ENCODE measurements at regions of chr19 and their contacts with region 1.

Region 1: DNA sequence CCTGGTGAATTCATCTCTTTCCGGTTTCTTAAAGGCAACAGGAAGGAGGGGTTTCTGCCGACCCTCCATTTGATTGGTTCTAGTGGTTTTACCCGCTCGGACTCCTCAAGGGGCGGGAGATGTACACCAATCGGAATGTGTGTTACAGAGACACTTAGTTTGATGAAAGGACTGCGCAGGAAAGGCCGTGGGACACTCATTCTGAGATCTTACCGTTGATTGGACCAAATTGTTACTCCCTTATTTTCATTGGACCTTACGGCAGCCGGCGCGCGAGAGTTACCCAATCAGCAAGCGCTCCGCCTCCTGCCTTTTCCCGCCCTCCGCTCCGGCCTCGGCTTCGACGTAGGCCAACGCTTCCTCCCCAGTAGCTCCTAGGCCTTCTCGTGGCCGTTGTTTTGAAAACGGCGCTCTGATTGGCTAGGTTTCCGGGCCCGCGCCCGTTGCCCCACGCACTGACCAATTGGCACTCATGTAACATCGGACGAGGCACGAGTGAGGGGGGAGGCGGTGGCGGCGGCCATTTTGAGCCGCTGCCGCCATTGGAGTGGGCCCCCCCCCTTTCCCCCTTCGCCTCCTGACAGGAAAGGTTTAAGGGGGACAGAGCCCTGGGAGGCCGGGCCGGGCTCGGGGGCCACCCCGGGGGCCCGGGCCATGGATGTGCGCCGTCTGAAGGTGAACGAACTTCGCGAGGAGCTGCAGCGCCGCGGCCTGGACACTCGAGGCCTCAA is at the start of gene HNRNPUL1:
- DNase-seq: peak; percentile 99
- H3K4me3 Mint-ChIP-seq: peak within 1 kb of the TSS; percentile 94
- H3K27ac Mint-ChIP-seq: peak within 1 kb of the TSS; percentile 99
- H3K4me1 Mint-ChIP-seq: peaks cover 52% of the 10 kb centered on the region
- H3K27me3 Mint-ChIP-seq: no peaks in the 10 kb centered on the region
- total RNA-seq, gene HNRNPUL1: 254 and 264 TPM in 2 replicates

Region 2: DNA sequence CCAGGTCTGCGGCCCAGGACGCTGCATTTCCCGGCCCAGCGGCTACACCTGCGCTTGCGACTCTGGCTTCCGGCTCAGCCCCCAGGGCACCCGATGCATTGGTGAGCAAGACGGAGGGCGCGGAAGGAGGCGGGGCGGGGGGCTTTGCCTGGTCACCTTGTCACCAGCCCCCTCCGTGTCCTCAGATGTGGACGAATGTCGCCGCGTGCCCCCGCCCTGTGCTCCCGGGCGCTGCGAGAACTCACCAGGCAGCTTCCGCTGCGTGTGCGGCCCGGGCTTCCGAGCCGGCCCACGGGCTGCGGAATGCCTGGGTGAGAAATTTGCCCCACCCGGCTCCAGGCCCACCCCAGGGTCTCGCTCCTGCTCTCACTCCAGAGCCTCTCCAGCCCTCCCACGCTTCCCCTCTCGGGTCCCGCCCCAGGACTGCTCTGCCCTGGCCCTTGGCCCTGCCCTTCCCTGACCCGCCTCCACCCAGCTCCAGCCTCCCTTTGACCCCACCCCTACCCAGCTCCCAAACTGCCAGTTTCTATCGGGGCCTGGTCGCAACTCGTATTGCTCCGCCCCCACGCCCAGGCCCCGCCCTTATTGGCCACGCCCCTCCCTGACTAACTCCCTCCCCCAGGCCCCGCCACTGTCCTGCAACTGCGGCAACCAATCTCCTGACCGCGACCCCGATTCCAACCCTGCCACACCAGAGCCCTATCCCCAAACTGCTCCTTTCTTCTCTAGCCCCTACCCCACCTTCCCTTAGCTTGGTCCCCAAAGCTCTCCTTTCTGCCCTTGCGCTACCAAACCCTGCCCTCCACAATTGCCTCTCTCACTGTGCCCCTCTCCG is 654.2 kb before region 1 on chr19:
- intact Hi-C with region 1: loop called (anchors 10 kb)
- DNase-seq: peak; percentile 86
- H3K4me3 Mint-ChIP-seq: peak overlapping the region; percentile 81
- H3K27ac Mint-ChIP-seq: peak overlapping the region; percentile 86
- H3K4me1 Mint-ChIP-seq: peaks cover 44% of the 10 kb centered on the region
- H3K27me3 Mint-ChIP-seq: no peaks in the 10 kb centered on the region

Region 3: DNA sequence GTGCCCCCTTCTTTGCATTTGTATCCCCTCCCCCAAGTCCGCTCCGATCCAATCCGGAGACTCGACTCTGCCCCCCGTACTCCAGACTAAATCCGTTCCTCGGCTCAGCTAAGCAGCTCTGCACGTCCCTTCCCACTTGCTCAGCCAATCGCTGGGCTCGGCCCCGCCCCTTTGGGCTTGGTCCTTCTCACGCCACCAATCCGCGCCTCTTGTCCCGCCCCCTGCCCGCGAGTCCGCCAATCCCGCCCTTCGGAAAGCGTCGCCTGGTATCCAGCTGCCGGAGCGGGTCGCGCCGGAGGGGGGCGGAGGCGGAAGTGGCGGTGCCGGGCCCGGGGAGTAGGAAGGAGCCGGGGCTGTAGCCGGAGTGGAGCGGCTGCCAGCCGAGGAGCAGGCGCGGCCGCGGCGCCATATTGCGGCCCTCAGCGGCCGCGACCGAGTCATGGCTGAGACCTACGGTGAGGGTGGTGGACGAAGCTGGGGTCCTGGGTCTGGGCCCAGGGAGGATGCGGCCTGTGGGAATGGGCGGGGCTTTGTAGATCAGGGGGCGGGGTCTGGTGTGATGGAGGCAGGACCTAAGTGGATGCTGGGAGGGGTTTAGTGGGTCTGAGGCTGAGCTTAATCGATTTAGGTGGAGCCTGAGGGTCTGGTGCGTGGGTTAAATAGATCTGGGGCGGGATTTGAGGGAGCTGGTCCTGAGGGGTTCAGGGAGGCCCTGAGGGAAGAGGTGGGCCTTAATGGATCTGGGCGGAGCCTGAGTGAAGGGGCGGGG is 485.9 kb before region 1 on chr19 and contains the start of gene RAB4B:
- intact Hi-C with region 1: loop called (anchors 2 kb)
- DNase-seq: peak; percentile 100
- H3K4me3 Mint-ChIP-seq: peak within 1 kb of the TSS; percentile 91
- H3K27ac Mint-ChIP-seq: peak within 1 kb of the TSS; percentile 89
- H3K4me1 Mint-ChIP-seq: peaks cover 51% of the 10 kb centered on the region
- H3K27me3 Mint-ChIP-seq: peaks cover 2% of the 10 kb centered on the region
- total RNA-seq, gene RAB4B: 40.6 and 45.5 TPM in 2 replicates

Region 4: GRCh38 chr19:41023193-41023592 is 240.8 kb before region 1 on chr19:
- intact Hi-C with region 1: no loop called
- DNase-seq: no peak
- H3K4me3 Mint-ChIP-seq: no peak overlapping the region
- H3K27ac Mint-ChIP-seq: no peak overlapping the region
- H3K4me1 Mint-ChIP-seq: no peaks in the 10 kb centered on the region
- H3K27me3 Mint-ChIP-seq: peaks cover 24% of the 10 kb centered on the region

Region 5: DNA sequence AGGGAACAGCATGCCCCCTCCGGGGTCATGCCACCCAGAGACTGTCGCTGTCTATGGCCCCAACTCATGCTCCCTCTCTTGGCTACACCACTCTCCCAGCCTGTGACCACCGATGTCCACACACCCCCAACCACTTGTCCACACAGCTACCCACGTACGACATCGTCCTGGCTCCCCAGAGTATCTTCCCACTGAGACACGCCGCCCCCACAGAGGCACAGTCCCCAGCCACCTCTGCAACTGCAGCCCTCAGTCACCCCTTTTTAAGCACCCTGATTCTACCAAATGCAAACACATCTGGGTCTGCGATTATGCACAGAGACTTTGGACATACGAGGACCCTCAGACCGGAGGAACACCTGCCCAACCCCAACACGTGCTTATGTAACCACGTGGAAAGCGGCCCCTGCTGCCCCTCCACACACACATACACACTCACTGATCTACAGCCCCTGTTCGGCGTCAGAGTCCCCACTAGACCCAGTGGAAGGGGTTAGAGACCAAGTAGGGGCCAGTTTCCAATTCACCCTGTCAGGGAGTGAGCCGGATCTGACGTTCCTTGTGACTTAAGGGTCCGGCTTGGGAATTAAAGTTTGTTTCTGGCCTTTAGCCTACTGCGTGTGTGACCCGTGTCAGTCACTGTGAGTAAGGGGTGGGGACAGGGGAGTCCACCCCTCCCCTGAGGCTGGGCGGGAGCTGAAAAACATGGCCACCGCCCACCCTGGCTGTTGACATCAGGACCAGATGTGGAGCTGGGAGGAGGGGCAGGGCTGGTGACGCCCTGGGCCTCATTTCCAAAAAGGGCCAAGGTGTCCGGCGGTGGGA is 56.9 kb before region 1 on chr19:
- intact Hi-C with region 1: loop called (anchors 1 kb)
- DNase-seq: no peak
- H3K4me3 Mint-ChIP-seq: no peak overlapping the region
- H3K27ac Mint-ChIP-seq: no peak overlapping the region
- H3K4me1 Mint-ChIP-seq: peaks cover 18% of the 10 kb centered on the region
- H3K27me3 Mint-ChIP-seq: no peaks in the 10 kb centered on the region

Region 6: DNA sequence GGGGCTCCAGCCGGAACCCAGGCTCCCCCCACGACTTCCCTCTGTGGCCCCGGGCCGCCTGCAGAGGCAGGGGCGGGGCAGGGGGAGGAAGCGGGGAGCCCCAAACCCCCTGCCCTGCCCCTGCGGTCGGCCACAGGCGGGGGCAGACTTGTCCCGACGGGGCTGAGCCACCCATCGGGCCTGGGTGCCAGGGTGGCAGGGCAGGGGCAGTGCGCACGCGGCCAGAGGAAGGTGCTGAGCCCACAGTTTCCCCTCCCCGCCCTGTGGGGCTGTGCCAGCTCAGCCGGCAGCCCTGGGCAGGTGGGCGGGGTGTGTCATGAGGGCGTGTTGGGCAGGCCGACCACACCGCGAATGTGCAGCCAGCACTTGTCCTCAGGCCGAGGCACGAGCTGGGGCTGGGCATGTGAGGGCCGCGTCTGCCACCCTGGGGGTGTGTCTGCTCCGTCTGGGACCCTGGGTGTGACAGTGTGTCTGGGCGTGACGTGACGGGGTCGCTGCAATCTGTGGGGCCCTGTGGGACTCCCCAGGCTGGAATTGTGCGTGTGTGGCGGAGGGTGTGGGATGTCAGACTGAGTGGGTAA is 63.7 kb after region 1 on chr19:
- intact Hi-C with region 1: loop called (anchors 1 kb)
- DNase-seq: peak; percentile 67
- H3K4me3 Mint-ChIP-seq: peak overlapping the region; percentile 76
- H3K27ac Mint-ChIP-seq: peak overlapping the region; percentile 95
- H3K4me1 Mint-ChIP-seq: peaks cover 59% of the 10 kb centered on the region
- H3K27me3 Mint-ChIP-seq: no peaks in the 10 kb centered on the region

Region 7: DNA sequence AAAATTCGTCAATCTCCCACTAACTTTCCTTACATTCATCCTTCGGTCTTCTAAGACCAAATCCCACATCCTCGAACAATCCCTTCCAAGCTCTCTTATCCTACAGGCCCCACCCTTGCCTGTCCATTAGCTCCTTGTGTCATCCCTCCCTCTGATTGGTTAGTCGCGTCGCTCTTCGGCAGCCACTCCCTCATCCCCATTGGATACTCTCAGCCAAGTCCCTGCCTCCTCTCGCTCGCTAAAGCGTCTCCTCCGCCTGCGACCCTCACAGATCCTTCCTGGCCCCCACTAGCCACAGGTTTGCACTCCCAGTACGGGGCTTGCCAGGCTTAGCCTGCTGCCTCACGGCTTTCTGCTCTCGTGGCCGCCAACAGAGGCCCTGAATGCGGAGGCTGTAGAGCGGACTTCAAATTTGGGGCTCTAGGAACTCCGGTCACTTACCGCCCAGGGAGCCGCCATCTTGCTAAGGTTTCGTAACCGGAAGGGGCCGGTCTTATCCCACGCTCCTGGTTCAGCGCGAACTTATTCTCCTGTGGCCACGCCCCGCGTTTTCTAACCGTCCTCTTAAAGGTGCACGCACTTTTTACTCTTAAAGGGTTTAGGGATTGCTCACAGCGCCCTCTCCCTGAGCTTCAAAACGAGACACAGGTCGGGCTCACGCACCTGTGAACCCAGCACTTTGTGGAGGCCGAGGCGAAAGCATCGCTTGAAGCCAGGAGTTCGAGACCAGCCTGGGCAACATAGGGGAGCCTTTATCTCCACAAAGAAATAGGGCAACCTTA is 175.6 kb after region 1 on chr19 and contains the start of gene DMAC2:
- intact Hi-C with region 1: loop called (anchors 1 kb)
- DNase-seq: peak; percentile 93
- H3K4me3 Mint-ChIP-seq: no peak within 1 kb of the TSS
- H3K27ac Mint-ChIP-seq: no peak within 1 kb of the TSS
- H3K4me1 Mint-ChIP-seq: peaks cover 5% of the 10 kb centered on the region
- H3K27me3 Mint-ChIP-seq: peaks cover 5% of the 10 kb centered on the region
- total RNA-seq, gene DMAC2: 56.7 and 57.3 TPM in 2 replicates

Region 8: DNA sequence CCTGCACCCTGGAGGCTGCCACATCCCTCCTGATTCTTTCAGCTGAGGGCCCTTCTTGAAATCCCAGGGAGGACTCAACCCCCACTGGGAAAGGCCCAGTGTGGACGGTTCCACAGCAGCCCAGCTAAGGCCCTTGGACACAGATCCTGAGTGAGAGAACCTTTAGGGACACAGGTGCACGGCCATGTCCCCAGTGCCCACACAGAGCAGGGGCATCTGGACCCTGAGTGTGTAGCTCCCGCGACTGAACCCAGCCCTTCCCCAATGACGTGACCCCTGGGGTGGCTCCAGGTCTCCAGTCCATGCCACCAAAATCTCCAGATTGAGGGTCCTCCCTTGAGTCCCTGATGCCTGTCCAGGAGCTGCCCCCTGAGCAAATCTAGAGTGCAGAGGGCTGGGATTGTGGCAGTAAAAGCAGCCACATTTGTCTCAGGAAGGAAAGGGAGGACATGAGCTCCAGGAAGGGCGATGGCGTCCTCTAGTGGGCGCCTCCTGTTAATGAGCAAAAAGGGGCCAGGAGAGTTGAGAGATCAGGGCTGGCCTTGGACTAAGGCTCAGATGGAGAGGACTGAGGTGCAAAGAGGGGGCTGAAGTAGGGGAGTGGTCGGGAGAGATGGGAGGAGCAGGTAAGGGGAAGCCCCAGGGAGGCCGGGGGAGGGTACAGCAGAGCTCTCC is 437.5 kb after region 1 on chr19:
- intact Hi-C with region 1: no loop called
- DNase-seq: no peak
- H3K4me3 Mint-ChIP-seq: no peak overlapping the region
- H3K27ac Mint-ChIP-seq: no peak overlapping the region
- H3K4me1 Mint-ChIP-seq: peaks cover 6% of the 10 kb centered on the region
- H3K27me3 Mint-ChIP-seq: peaks cover 7% of the 10 kb centered on the region